WTC11 (cell line): ENCODE measurements at regions of chr10 and their contacts with region 1.

Region 1: GRCh38 chr10:71708301-71708703 is 11.3 kb downstream of the C10orf105 start:
- DNase-seq: peak; percentile 92
- ATAC-seq: peak; percentile 94
- H3K4me3 Mint-ChIP-seq: no peak overlapping the region; the same call in 1 of the 2 replicates
- H3K27ac Mint-ChIP-seq: no peak overlapping the region
- H3K4me1 Mint-ChIP-seq: peaks cover 4% of the 10 kb centered on the region
- H3K27me3 Mint-ChIP-seq: no peaks in the 10 kb centered on the region; the same call in 1 of the 2 replicates
- CTCF ChIP-seq: peak; percentile 84

Region 2: GRCh38 chr10:71343392-71343773 is 364.9 kb before region 1 on chr10:
- CTCF ChIA-PET with region 1: interaction called, 10 read pairs
- POLR2A ChIA-PET with region 1: no interaction called
- DNase-seq: no peak
- ATAC-seq: no peak
- H3K4me3 Mint-ChIP-seq: no peak overlapping the region
- H3K27ac Mint-ChIP-seq: peak overlapping the region; percentile 89; the same call in 1 of the 2 replicates
- H3K4me1 Mint-ChIP-seq: peaks cover 68% of the 10 kb centered on the region
- H3K27me3 Mint-ChIP-seq: no peaks in the 10 kb centered on the region
- CTCF ChIP-seq: no peak

Region 3: DNA sequence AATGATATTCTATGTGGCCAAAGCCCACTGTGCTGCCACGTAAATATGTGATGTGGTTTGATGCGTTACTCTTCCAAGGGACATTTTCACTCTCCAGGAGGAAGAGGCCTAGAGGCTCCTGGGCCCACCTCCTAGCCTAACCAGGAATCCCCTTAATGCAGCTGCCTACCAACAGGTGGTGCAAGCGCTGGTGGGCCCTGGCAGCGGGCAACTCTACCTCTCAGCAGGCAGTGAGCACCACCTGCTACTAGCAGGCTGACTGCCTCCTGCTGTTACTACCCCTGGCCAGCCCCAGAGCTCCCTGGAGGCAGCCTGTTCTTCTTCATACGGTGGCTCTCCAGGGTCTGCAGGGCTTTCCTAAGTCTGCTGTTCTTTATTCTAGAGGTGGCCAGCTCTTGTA is 248.8 kb before region 1 on chr10:
- CTCF ChIA-PET with region 1: interaction called, 12 read pairs
- POLR2A ChIA-PET with region 1: no interaction called
- DNase-seq: no peak
- ATAC-seq: peak; percentile 39; the same call in 1 of the 2 replicates
- H3K4me3 Mint-ChIP-seq: no peak overlapping the region
- H3K27ac Mint-ChIP-seq: no peak overlapping the region
- H3K4me1 Mint-ChIP-seq: no peaks in the 10 kb centered on the region
- H3K27me3 Mint-ChIP-seq: no peaks in the 10 kb centered on the region
- CTCF ChIP-seq: no peak

Region 4: GRCh38 chr10:71597821-71598498 is 110.3 kb before region 1 on chr10:
- CTCF ChIA-PET with region 1: interaction called, 10 read pairs
- POLR2A ChIA-PET with region 1: no interaction called
- DNase-seq: no peak
- ATAC-seq: peak; percentile 43; the same call in 1 of the 2 replicates
- H3K4me3 Mint-ChIP-seq: no peak overlapping the region
- H3K27ac Mint-ChIP-seq: no peak overlapping the region
- H3K4me1 Mint-ChIP-seq: 0 out of 2 replicates have a peak, but pooled peaks cover 4% of the 10 kb centered on the region
- H3K27me3 Mint-ChIP-seq: no peaks in the 10 kb centered on the region
- CTCF ChIP-seq: no peak

Region 5: DNA sequence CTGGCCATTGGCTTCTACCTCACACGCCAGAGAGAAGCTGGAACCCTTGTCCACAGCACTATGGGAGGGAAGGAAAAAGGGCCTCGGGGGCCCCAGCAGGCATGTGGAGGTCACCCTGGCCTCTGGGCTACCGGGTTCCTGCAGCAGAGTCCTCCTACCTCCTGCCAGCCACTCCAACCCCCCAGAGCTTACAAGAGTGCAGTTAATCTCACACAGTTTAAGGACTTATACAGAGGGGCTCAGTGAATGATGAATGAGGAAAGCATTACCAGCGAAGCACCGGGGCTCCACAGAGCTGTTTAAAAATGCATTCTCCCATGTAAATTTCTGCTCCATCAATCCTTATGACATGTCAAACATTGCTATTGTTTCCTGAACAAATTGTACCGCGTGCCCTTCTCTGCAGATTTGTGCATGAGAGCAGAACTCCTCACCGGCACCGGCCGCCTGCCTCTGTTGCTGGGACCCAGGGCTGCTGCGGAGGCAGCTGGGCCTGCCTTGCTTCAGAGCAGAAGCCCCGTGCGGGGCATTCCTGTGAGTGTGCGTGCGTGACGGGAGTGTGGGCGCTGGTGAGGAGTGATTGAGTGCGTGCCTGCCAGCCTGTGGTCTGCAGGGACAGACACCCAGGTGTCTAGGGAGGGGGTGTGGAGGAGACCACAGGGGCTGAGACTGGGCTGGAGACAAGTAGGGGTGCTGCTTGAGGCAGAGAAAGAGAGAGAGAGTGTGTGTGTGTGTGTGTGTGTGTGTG is 41.5 kb before region 1 on chr10:
- CTCF ChIA-PET with region 1: interaction called, 17 read pairs
- POLR2A ChIA-PET with region 1: no interaction called
- DNase-seq: no peak
- ATAC-seq: no peak
- H3K4me3 Mint-ChIP-seq: no peak overlapping the region
- H3K27ac Mint-ChIP-seq: no peak overlapping the region
- H3K4me1 Mint-ChIP-seq: peaks cover 37% of the 10 kb centered on the region
- H3K27me3 Mint-ChIP-seq: peaks cover 14% of the 10 kb centered on the region; the same call in 1 of the 2 replicates
- CTCF ChIP-seq: no peak

Region 6: DNA sequence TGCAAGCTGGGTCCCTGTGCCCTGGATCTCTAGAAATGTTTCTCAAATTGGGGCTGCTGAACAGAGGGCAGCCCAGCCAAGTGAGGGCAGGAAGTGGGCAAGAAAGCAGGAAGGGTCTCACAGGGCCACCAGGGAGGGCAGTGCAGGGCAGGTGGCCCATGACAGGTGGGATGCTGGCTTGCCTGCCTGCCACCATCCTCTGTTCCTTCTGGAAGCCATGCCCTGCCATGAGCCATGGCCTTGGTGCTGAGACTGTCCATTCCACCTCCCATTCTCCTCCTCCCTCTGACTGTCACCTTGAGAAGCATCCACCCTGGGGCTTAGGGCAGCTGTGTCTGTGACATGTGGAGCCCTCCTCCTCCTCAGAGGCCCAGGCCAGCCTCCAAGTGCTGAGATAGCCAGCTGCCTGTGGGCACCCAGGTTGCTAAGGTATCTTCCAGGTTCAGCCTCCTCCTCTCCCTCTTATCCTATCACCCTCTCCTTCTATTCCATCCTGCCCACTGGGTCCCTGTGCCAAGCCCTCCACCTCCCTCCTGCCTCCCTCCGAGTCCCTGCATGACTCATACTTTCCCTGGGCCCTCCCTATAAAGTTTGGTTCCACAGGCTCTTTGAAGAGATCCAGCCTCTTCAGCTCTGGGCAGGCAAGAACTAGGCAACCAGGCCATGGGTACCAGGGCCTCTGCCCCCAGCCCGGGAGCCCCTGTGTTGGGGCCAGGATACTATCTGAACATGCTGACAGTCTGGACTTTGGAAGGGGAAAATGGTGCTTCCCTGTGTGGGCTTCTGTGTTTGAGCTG is 63.7 kb after region 1 on chr10:
- CTCF ChIA-PET with region 1: interaction called, 16 read pairs
- POLR2A ChIA-PET with region 1: no interaction called
- DNase-seq: no peak
- ATAC-seq: no peak
- H3K4me3 Mint-ChIP-seq: 0 out of 2 replicates have a peak overlapping the region, but pooled peaks have one; percentile 66
- H3K27ac Mint-ChIP-seq: no peak overlapping the region
- H3K4me1 Mint-ChIP-seq: peaks cover 6% of the 10 kb centered on the region
- H3K27me3 Mint-ChIP-seq: peaks cover 29% of the 10 kb centered on the region
- CTCF ChIP-seq: no peak